ENCODE measurements at regions of chr15 and their contacts with region 1.

Region 1: DNA sequence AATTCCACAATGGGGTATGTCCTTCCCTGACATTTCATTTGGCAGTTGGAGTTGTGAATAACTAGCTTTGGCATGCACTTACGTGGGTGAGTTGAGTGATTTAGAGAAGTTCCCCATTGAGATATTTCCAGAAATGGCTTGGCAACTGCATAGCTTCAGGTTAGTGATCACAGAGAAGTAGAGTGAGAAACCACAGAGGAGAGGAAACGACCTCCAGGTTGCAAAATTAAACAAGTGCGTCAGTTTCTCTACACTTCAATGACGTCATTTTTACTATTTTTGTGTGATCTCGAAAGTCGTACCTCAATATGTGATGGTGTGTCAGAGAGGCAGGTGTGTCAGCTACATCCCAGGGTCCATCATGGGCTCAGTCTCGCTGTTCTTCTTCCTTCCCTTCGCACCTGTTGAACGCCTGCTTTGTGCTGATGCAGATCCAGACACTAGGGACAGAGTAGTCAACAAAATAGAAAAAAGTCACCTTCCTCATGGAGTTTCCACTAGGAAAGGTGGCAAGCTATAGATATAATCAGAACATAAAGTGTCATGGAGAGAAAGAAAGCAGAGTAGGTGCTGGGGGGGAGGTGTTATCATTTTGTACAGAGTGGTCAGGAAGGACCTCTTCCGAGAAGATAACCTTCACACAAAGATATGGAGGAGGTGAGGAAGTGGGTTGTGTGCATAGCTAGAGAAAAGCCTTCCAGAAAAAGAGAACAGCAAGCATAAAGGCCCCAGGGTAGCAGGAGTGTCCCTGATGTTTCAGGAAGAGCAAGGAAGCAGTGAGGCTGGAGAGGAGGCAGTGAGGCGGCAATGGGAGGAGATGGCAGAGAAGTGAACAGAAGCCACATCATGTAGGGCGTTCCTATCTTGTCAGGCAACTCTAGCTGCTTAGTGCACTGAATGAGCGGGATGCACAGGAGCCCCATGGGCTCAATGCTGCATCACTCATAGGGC is 75.6 kb downstream of the MCTP2 start:
- DNase-seq: peak; percentile 78
- ATAC-seq: peak; percentile 91
- H3K4me3 ChIP-seq: no peak overlapping the region
- H3K27ac ChIP-seq: no peak overlapping the region
- H3K4me1 ChIP-seq: peaks cover 13% of the 10 kb centered on the region
- H3K27me3 ChIP-seq: no peaks in the 10 kb centered on the region
- CTCF ChIP-seq: no peak
- EP300 ChIP-seq: peak; percentile 94 to 96
- POLR2A ChIP-seq: no peak
- RAD21 ChIP-seq: no peak

Region 2: DNA sequence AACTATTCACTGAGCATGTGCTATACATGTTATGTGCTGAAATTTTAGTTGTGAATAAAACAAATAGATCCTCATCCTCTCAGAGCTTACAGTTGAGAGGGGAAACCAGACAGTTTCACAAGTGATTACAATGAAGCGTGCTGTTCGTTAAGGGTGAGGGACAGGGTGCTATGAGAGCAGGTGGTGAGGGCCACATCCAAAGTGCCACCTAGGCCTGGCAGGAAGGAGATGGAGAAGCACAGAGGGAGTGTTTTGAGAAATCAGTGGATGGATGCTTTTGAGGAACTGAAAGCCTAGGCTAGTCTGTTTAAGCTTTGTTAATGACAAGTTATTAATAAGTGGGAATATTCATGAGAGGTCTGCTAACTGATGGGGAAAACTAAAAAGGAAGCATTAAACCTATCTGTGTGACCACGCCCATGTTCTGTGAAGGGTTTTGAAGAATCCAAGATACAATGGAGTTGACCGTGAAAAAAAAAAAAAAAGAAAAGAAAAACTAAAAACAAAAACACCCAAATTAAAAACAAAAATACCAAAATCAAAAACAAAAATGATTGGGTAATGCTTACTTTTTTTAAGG is 68.3 kb before region 1 on chr15:
- CTCF ChIA-PET with region 1: no interaction called
- POLR2A ChIA-PET with region 1: interaction called, 3 read pairs
- RAD21 ChIA-PET with region 1: interaction called, 62 read pairs
- SMC1A ChIA-PET with region 1: interaction called, 104 read pairs
- in situ Hi-C with region 1: loop called (anchors 5 kb)
- intact Hi-C with region 1: no loop called
- DNase-seq: no peak
- ATAC-seq: peak; percentile 85
- H3K4me3 ChIP-seq: no peak overlapping the region
- H3K27ac ChIP-seq: no peak overlapping the region
- H3K4me1 ChIP-seq: 0 out of 2 replicates have a peak, but pooled peaks cover 5% of the 10 kb centered on the region
- H3K27me3 ChIP-seq: no peaks in the 10 kb centered on the region
- CTCF ChIP-seq: no peak
- EP300 ChIP-seq: peak in 1 of 2 experiments; percentile 25; a peak in 1 of 4 replicates
- POLR2A ChIP-seq: no peak
- RAD21 ChIP-seq: no peak

Region 3: GRCh38 chr15:94253742-94254141 is 53.2 kb before region 1 on chr15:
- CTCF ChIA-PET with region 1: interaction called, 5 read pairs
- POLR2A ChIA-PET with region 1: no interaction called
- RAD21 ChIA-PET with region 1: interaction called, 8 read pairs
- SMC1A ChIA-PET with region 1: interaction called, 15 read pairs
- in situ Hi-C with region 1: no loop called
- intact Hi-C with region 1: no loop called
- DNase-seq: no peak
- ATAC-seq: peak; percentile 83
- H3K4me3 ChIP-seq: no peak overlapping the region
- H3K27ac ChIP-seq: no peak overlapping the region
- H3K4me1 ChIP-seq: no peaks in the 10 kb centered on the region
- H3K27me3 ChIP-seq: no peaks in the 10 kb centered on the region
- CTCF ChIP-seq: no peak
- EP300 ChIP-seq: no peak
- POLR2A ChIP-seq: no peak
- RAD21 ChIP-seq: no peak

Region 4: GRCh38 chr15:94263341-94264273 is 43.4 kb before region 1 on chr15:
- CTCF ChIA-PET with region 1: interaction called, 4 read pairs
- POLR2A ChIA-PET with region 1: no interaction called
- RAD21 ChIA-PET with region 1: interaction called, 13 read pairs
- SMC1A ChIA-PET with region 1: interaction called, 22 read pairs
- in situ Hi-C with region 1: no loop called
- intact Hi-C with region 1: no loop called
- DNase-seq: peak; percentile 73
- ATAC-seq: peak; percentile 78
- H3K4me3 ChIP-seq: no peak overlapping the region
- H3K27ac ChIP-seq: no peak overlapping the region
- H3K4me1 ChIP-seq: peaks cover 2% of the 10 kb centered on the region; the same call in 1 of the 2 replicates
- H3K27me3 ChIP-seq: no peaks in the 10 kb centered on the region
- CTCF ChIP-seq: no peak
- EP300 ChIP-seq: peak; percentile 45 to 55; a peak in 2 of 4 replicates
- POLR2A ChIP-seq: no peak
- RAD21 ChIP-seq: no peak

Region 5: DNA sequence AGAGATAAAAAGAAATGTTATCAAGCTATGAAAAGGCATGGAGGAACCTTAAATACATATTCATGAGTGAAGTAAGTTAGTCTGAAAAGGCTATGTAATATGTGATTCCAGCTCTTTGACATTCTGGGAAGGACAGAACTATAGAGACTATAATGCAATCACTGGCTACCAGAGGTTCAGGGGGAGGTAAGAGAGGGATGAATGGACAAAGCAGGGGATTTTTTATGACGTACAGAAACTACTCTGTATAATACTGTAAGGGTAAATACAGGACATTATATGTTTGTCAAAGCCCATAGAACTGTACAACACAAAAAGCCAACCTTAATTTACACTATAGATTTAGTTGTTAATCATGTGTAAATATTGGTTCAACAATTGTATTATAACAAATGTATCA is 29.5 kb before region 1 on chr15:
- CTCF ChIA-PET with region 1: interaction called, 4 read pairs
- POLR2A ChIA-PET with region 1: no interaction called
- RAD21 ChIA-PET with region 1: interaction called, 4 read pairs
- SMC1A ChIA-PET with region 1: interaction called, 10 read pairs
- in situ Hi-C with region 1: no loop called
- intact Hi-C with region 1: no loop called
- DNase-seq: no peak
- ATAC-seq: peak; percentile 78
- H3K4me3 ChIP-seq: no peak overlapping the region
- H3K27ac ChIP-seq: no peak overlapping the region
- H3K4me1 ChIP-seq: no peaks in the 10 kb centered on the region
- H3K27me3 ChIP-seq: no peaks in the 10 kb centered on the region
- CTCF ChIP-seq: no peak
- EP300 ChIP-seq: no peak; a peak in 1 of 4 replicates
- POLR2A ChIP-seq: no peak
- RAD21 ChIP-seq: no peak

Measured in GM12878 (cell line).